Heart right ventricle (tissue), 16 donors: ENCODE measurements at regions of chr1 and their contacts with region 1.

Region 1: DNA sequence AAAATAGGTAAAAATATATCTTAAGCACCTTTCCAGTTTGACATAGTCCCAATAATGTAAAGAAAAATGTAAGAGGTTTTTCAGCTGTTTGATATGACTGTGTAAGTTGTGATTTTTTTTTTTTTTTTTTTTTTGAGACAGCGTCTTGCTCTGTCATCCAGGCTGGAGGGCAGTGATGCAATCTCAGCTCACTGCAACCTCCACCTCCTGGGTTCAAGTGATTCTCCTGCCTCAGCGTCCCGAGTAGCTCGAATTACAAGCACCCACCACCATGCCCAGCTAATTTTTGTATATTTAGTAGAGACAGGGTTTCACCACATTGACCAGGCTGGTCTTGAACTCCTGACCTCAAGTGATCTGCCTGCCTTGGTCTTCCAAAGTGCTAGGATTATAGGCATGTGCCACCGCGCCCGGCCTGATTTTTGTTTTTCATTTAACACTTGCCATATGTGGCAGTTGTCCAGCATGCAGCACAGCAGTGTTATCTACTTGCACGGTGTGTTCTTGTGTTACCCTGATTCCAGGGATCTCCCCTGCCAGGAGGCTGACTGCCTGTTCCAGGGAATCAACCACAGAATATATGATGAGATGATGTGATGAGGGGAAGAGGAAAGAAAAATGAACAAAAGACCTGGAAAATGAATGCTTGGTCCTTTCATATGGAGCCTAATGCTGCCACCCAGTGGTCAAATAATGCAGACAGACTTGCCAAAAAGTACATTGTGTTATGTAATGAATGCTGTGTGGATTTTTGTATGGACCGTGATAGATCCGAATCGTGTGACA is 79.0 kb downstream of the RAVER2 start:
- DNase-seq: peak in 1 of 2 donors; percentile 77
- ATAC-seq: peak; percentile 53 to 82 (median 68)
- H3K4me3 ChIP-seq: peak overlapping the region in 1 of 10 donors; percentile 13
- H3K27ac ChIP-seq: no peak overlapping the region
- H3K4me1 ChIP-seq: peaks cover 0 to 16% (median 5%) of the 10 kb centered on the region in 9 donors
- H3K27me3 ChIP-seq: no peaks in the 10 kb centered on the region
- CTCF ChIP-seq: peak; percentile 60 to 90 (median 87)

Region 2: DNA sequence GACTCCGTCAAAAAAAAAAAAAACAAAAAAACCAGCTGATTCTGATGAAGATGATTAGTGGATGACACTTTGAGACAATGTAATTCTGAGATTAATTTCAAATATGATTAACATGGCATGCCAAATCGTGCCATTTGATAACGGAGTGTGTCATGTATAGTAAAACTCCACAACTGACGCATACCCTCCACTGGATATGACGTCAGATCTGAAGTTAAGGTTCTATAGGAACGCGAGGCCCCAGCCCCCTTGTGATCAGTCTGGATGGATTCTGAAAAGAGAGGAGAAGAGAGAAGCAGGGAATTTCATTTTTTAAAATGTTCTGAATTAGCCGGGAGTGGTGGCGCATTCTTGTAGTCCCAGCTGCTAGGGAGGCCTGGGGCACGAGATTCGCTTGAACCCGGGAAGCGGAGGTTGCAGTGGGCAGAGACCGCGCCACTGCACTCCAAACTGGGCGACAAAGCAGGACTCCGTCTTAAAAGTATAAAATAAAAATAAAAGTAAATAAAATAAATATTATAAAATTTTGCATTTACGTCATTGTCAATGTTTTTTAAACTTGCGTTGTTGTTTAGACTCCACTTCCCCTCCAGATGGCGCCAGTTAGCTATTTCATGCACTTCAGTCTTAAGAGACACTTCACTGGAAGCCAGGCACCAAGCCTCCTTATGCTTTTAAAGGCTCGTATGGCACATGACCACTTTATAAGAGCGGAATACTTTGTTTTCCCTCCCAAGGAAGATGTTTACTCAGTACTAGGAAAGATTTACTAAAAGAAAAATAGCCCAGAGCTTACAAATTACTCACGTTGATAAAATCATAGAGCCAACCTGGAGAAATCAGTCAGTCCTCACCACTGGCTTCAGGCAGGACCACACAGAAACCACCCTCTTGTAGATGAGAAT is 555.0 kb before region 1 on chr1:
- intact Hi-C with region 1: loop called (anchors 1 to 10 kb)
- DNase-seq: peak in 1 of 2 donors; percentile 82
- ATAC-seq: peak; percentile 59 to 81 (median 74)
- H3K4me3 ChIP-seq: no peak overlapping the region
- H3K27ac ChIP-seq: no peak overlapping the region
- H3K4me1 ChIP-seq: peaks cover 0 to 7% (median 0%) of the 10 kb centered on the region in 9 donors
- H3K27me3 ChIP-seq: peaks cover 0 to 11% (median 0%) of the 10 kb centered on the region in 7 donors
- CTCF ChIP-seq: peak; percentile 69 to 91 (median 82)

Region 3: DNA sequence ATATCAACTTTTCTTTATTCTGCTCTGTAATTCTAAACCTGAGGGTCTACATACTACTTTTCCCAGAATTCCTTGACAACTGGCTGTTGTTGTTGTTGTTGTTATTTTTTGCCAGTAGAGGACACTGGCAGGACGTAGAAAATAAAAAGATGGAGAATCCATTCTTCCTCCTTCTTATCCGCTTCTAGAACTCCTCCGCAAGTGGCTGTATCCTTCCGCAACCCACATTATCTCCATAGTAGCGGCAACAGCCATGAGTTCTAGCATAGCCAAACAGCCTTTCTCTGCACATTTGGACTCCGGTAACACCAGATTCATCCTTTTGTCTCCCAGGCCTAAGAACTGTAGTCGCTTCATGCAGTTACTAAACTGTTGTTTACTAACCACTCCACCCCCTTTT is 445.1 kb before region 1 on chr1:
- intact Hi-C with region 1: loop called in 1 of 10 experiments (anchors 5 kb)
- DNase-seq: no peak
- ATAC-seq: no peak
- H3K4me3 ChIP-seq: no peak overlapping the region
- H3K27ac ChIP-seq: no peak overlapping the region
- H3K4me1 ChIP-seq: no peaks in the 10 kb centered on the region
- H3K27me3 ChIP-seq: no peaks in the 10 kb centered on the region
- CTCF ChIP-seq: peak in 7 of 9 donors; percentile 20 to 51 (median 32)

Region 4: DNA sequence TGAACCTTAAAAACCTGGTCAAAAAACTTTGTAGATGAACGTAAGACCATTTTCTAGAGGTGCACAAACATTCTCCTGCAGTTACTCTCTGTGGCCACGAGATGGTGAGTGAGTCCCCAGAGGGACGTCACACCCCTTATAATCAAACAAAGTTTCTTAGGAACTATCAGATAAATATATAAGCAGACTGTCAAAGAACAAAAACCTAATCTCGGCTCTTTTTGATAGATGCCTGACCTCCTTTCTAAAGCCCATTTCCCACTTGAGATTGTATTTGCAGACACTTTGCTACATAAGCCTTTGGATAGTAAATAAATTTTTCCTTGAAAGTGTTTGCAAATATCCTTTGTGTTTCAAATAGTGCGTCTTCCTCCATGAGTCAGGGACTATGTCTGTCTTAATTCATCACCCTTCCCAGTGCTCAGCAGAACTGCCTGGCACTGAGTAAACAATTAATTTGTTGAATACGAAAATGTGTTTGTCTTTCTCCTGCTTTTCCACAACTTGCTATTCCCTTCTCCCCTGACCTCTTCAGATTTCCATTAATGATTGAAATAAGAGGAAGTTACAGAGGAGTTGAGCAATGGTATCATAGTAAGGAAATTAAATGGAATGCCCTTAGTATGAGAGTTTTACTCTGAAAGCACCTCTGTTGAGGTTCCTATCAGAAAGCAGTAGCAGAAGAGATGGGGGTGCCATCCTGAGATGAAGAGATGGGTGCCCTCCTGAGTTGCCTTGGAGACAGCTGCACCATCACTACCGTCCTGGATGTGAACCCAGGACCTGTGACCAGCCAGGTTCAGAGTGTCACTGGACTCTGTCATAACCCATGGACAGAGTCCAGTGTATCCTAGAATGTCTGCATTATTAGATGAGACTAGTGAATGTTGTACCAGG is 136.8 kb before region 1 on chr1:
- intact Hi-C with region 1: loop called (anchors 2 to 5 kb)
- DNase-seq: peak in 1 of 2 donors; percentile 19
- ATAC-seq: peak in 7 of 8 donors; percentile 41 to 82 (median 74)
- H3K4me3 ChIP-seq: no peak overlapping the region
- H3K27ac ChIP-seq: peak overlapping the region in 1 of 10 donors; percentile 34
- H3K4me1 ChIP-seq: peaks cover 0 to 23% (median 5%) of the 10 kb centered on the region in 9 donors
- H3K27me3 ChIP-seq: no peaks in the 10 kb centered on the region
- CTCF ChIP-seq: peak; percentile 63 to 92 (median 85)

Region 5: GRCh38 chr1:64744492-64745180 is 79.2 kb before region 1 on chr1 and contains the start of gene RAVER2:
- intact Hi-C with region 1: loop called in 9 of 10 experiments (anchors 2 to 10 kb)
- DNase-seq: peak; percentile 79 to 80
- ATAC-seq: peak; percentile 81 to 92 (median 90)
- H3K4me3 ChIP-seq: peak within 1 kb of the TSS; percentile 74 to 94 (median 88)
- H3K27ac ChIP-seq: peak within 1 kb of the TSS; percentile 74 to 92 (median 84)
- H3K4me1 ChIP-seq: peaks cover 0 to 42% (median 28%) of the 10 kb centered on the region in 9 donors
- H3K27me3 ChIP-seq: no peaks in the 10 kb centered on the region
- CTCF ChIP-seq: peak in 8 of 9 donors; percentile 5 to 73 (median 60)
- total RNA-seq, gene RAVER2: 13.7 to 30.6 (median 21.5) TPM

Region 6: DNA sequence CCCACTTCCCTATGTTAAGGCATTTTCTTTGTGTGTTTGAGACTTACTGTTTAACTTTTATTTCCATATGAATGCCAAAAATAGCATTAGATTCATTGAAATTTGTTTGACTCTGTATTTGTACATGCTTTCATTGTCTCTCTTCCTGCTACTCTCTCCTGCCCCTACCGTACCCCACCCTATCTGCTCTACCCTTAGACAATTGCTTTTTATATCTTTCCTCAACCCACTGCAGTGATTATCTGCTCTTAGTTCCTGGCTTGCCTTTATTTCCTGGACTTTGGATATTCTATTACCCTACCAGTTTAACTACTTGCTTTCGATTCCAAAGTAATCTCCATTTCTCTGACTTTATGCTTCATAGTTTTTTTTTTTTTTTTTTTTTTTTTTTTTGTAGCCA is 68.5 kb before region 1 on chr1:
- intact Hi-C with region 1: loop called in 1 of 10 experiments (anchors 5 kb)
- DNase-seq: no peak
- ATAC-seq: peak; percentile 72 to 90 (median 88)
- H3K4me3 ChIP-seq: no peak overlapping the region
- H3K27ac ChIP-seq: peak overlapping the region in 8 of 10 donors; percentile 1 to 68 (median 43)
- H3K4me1 ChIP-seq: peaks cover 4 to 56% (median 33%) of the 10 kb centered on the region in 9 donors
- H3K27me3 ChIP-seq: no peaks in the 10 kb centered on the region
- CTCF ChIP-seq: peak in 1 of 9 donors; percentile 16

Region 7: DNA sequence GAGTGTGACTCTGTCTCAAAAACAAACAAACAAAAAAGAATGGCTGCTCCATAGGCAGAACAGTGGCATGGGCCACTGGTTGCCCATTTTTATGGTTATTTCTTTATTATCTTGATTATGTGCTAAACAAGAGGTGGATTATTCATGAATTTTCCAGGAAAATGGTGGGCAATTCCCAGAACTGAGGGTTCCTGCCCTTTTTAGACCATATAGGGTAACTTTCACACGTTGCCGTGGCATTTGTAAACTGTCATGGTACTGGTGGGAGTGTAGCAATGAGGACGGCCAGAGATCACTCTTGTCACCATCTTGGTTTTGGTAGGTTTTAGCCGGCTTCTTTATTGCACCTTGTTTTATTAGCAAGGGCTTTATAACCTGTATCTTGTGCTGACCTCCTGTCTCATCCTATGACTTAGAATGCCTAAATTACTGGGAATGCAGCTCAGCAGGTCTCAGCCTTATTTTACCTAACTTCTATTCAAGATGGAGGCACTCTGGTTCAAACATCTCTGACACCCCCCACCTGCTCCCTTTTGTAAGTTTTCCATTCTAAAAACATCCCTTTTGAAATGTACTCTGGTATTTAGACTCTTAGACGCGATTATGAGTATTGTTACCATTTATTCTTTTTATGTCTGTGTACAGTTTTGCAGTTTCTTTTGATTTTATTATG is 21.9 kb before region 1 on chr1:
- intact Hi-C with region 1: loop called in 1 of 10 experiments (anchors 1 kb)
- DNase-seq: no peak
- ATAC-seq: no peak
- H3K4me3 ChIP-seq: no peak overlapping the region
- H3K27ac ChIP-seq: no peak overlapping the region
- H3K4me1 ChIP-seq: peaks cover 0 to 10% (median 0%) of the 10 kb centered on the region in 9 donors
- H3K27me3 ChIP-seq: no peaks in the 10 kb centered on the region
- CTCF ChIP-seq: no peak